CD8-positive, alpha-beta memory T cell (primary cell): ENCODE measurements at regions of chr14 and their contacts with region 1.

Region 1: GRCh38 chr14:93939304-93940229 is 12.4 kb downstream of the FAM181A start:
- DNase-seq: peak; percentile 81 to 91 (median 85)
- H3K4me3 ChIP-seq: peak overlapping the region; percentile 45
- H3K4me3 Mint-ChIP-seq: peak overlapping the region; percentile 26 to 87 (median 56)
- H3K27ac ChIP-seq: no peak overlapping the region
- H3K27ac Mint-ChIP-seq: peak overlapping the region in 4 of 8 donors; percentile 23 to 70 (median 31)
- H3K4me1 ChIP-seq: no peaks in the 10 kb centered on the region
- H3K4me1 Mint-ChIP-seq: peaks cover 5 to 21% (median 6%) of the 10 kb centered on the region in 3 donors
- H3K27me3 ChIP-seq: no peaks in the 10 kb centered on the region
- H3K27me3 Mint-ChIP-seq: peaks cover 0 to 4% of the 10 kb centered on the region in 2 donors

Region 2: DNA sequence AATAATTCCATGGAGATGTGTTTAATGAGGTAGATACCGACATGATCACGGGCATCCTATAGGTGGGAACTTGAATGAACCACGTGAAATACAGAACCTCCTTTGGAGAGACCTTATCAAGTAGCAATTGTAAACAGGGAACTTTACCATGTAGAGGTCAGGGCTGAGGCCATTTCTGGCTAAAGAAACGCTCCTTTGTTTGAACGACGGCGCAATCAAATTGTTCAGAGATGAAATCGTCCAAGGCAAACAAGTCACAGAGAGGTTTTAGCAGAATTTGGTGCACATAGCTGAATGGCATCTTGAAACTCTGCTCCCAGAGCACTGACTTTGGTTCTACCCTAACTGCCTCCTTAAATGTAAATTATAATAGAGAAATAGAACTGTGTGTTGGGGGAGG is 161.1 kb before region 1 on chr14:
- CTCF ChIA-PET with region 1: no interaction called
- POLR2A ChIA-PET with region 1: no interaction called
- DNase-seq: no peak
- H3K4me3 ChIP-seq: no peak overlapping the region
- H3K4me3 Mint-ChIP-seq: no peak overlapping the region
- H3K27ac ChIP-seq: no peak overlapping the region
- H3K27ac Mint-ChIP-seq: no peak overlapping the region
- H3K4me1 ChIP-seq: no peaks in the 10 kb centered on the region
- H3K4me1 Mint-ChIP-seq: no peaks in the 10 kb centered on the region
- H3K27me3 ChIP-seq: no peaks in the 10 kb centered on the region
- H3K27me3 Mint-ChIP-seq: peaks cover 0 to 6% of the 10 kb centered on the region in 2 donors

Region 3: GRCh38 chr14:93799989-93800921 is 139.3 kb before region 1 on chr14:
- CTCF ChIA-PET with region 1: no interaction called
- POLR2A ChIA-PET with region 1: no interaction called
- DNase-seq: no peak
- H3K4me3 ChIP-seq: no peak overlapping the region
- H3K4me3 Mint-ChIP-seq: no peak overlapping the region
- H3K27ac ChIP-seq: no peak overlapping the region
- H3K27ac Mint-ChIP-seq: no peak overlapping the region
- H3K4me1 ChIP-seq: no peaks in the 10 kb centered on the region
- H3K4me1 Mint-ChIP-seq: no peaks in the 10 kb centered on the region
- H3K27me3 ChIP-seq: no peaks in the 10 kb centered on the region
- H3K27me3 Mint-ChIP-seq: peaks cover 2 to 12% of the 10 kb centered on the region in 2 donors

Region 4: DNA sequence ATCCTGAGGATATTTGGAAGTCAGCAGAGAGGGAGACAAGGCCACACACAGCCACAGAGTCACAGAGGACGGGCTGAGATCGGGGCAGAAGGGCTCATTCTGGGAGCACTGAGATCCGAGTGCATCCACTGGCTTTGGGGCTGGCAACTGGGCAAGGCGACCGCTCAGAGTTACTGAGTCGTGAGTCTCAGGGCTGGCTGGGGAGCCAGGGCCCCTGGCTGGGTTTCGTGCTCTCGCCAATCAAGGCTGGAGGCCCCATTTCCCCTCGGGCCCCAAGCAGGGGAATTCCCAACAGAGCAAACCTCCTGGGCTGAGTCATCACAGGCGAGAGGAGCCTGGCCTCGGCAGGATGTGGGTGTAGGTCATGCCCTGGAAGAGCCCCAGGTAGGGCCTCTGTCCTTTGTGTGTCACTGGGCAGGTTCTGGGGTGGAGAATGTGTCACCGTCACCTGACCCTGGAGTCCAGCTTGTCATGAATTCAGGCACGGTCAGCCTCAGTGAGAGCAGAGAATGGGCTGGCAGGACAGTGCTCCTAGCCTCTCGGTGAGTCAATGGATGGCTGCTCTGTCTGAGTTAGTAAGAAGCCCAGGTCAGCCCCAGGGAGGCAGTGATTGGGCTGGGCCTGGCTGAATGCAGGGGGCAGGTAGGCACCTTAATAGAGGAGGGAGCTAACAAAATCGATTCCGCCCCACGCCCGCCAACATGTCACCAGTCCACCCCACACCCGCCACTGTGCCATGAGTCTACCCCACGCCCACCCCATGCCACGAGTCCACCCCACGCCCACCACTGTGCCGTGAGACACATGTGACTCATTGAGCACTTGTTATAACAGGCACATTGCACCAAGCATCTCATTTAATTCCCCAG is 19.9 kb after region 1 on chr14:
- CTCF ChIA-PET with region 1: interaction called, 945 read pairs
- POLR2A ChIA-PET with region 1: interaction called, 17 read pairs
- DNase-seq: peak; percentile 73 to 97 (median 90)
- H3K4me3 ChIP-seq: peak overlapping the region; percentile 3
- H3K4me3 Mint-ChIP-seq: peak overlapping the region; percentile 65 to 88 (median 80)
- H3K27ac ChIP-seq: peak overlapping the region; percentile 55
- H3K27ac Mint-ChIP-seq: peak overlapping the region; percentile 98 to 100 (median 99)
- H3K4me1 ChIP-seq: peaks cover 97% of the 10 kb centered on the region
- H3K4me1 Mint-ChIP-seq: peaks cover 94 to 99% (median 99%) of the 10 kb centered on the region in 3 donors
- H3K27me3 ChIP-seq: no peaks in the 10 kb centered on the region
- H3K27me3 Mint-ChIP-seq: no peaks in the 10 kb centered on the region

Region 5: DNA sequence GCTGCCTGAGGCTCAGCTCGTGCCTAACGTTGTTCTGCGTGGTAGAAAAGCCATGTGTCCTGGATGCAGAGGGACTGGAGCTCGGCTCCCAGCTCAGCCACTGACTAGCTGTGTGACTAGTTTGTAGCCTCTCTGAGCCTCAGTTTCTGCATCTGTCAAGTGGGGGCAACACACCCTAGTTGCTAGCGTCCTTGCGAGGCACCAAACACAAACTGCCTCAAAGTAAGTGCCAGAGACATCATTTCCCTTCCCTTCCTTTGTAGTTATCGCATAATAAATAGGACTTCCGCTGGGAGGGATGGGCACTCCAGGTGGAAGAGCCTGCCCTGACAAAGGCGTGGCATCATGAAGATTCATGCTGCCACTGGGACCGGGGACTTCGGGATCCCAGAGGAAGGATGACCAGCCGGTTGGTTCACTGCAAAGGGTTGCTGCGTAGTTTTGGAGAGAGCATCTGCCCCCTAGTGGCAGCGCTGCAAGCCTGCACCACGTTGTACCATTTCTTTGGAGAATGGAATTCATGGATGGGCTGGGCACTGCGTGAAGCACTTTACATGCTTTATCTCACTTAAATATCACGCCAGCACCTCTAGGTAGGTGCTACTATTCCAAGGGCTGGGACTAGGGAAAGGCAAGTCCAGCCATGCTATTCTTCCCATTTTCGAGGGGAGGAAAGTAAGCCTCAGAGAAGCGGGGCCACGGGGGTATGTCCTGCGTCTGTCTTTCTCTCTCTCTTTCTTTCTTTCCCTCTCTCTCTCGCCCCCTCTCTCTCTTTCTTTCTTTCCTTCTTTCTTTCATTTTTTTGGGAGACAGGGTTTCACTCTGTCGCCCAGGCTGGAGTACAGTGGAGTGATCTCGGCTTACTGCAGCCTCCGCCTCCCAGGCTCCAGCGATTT is 62.2 kb after region 1 on chr14:
- CTCF ChIA-PET with region 1: interaction called, 272 read pairs
- POLR2A ChIA-PET with region 1: interaction called, 8 read pairs
- DNase-seq: peak; percentile 40 to 69 (median 50)
- H3K4me3 ChIP-seq: peak overlapping the region; percentile 27
- H3K4me3 Mint-ChIP-seq: peak overlapping the region in 2 of 7 donors; percentile 10 to 28
- H3K27ac ChIP-seq: no peak overlapping the region
- H3K27ac Mint-ChIP-seq: no peak overlapping the region
- H3K4me1 ChIP-seq: peaks cover 7% of the 10 kb centered on the region
- H3K4me1 Mint-ChIP-seq: peaks cover 6 to 10% (median 7%) of the 10 kb centered on the region in 3 donors
- H3K27me3 ChIP-seq: no peaks in the 10 kb centered on the region
- H3K27me3 Mint-ChIP-seq: peaks cover 4 to 13% of the 10 kb centered on the region in 2 donors

Region 6: DNA sequence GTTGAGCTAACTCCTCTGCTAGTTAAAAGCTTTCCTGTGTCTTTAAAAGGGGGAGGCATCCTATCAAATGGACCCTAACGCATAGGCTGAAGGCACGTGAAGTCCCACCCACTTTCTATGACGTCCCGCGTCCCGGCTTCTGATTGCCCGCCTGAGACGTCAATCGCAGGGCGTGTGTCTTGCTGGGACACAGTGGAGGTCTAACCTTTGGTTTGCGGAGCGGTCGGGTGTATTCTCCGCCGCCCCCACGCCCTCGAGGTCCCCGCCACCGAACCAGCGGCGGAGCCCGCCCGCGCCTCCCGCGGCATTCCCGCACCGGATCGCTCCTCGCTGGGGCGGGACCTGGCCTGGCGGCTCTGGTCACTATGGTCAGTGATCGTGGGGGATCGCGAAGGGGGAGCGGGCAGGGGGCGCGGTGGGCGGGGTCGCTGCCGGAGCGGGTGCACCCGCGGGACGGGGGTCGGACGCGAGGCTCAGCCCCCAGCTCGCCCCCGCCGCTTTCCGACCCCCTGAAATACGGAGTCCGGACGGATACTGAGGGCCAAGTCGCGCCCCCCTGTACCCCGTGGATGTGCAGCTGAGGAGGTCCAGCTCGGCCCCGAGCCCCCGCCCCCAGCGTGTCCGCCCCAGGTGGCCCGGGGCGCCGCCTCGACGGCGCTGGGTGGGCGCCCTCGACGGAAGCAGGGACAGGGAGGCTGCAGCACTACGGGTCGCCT is 86.8 kb after region 1 on chr14 and contains the start of gene OTUB2:
- CTCF ChIA-PET with region 1: interaction called, 29 read pairs
- POLR2A ChIA-PET with region 1: interaction called, 4 read pairs
- DNase-seq: peak; percentile 90 to 96 (median 94)
- H3K4me3 ChIP-seq: peak within 1 kb of the TSS; percentile 57
- H3K4me3 Mint-ChIP-seq: peak within 1 kb of the TSS; percentile 71 to 94 (median 82)
- H3K27ac ChIP-seq: no peak within 1 kb of the TSS
- H3K27ac Mint-ChIP-seq: peak within 1 kb of the TSS in 4 of 8 donors; percentile 19 to 85 (median 82)
- H3K4me1 ChIP-seq: peaks cover 5% of the 10 kb centered on the region
- H3K4me1 Mint-ChIP-seq: peaks cover 21 to 36% (median 34%) of the 10 kb centered on the region in 3 donors
- H3K27me3 ChIP-seq: no peaks in the 10 kb centered on the region
- H3K27me3 Mint-ChIP-seq: peaks cover 0 to 3% of the 10 kb centered on the region in 2 donors
- total RNA-seq, gene OTUB2: 1.1 to 1.8 TPM

Region 7: GRCh38 chr14:94136575-94137331 is 197.2 kb after region 1 on chr14:
- CTCF ChIA-PET with region 1: interaction called, 43 read pairs
- POLR2A ChIA-PET with region 1: interaction called, 3 read pairs
- DNase-seq: peak; percentile 69 to 87 (median 72)
- H3K4me3 ChIP-seq: no peak overlapping the region
- H3K4me3 Mint-ChIP-seq: no peak overlapping the region
- H3K27ac ChIP-seq: no peak overlapping the region
- H3K27ac Mint-ChIP-seq: peak overlapping the region in 1 of 8 donors; percentile 29
- H3K4me1 ChIP-seq: no peaks in the 10 kb centered on the region
- H3K4me1 Mint-ChIP-seq: peaks cover 0 to 5% (median 0%) of the 10 kb centered on the region in 3 donors
- H3K27me3 ChIP-seq: peaks cover 4% of the 10 kb centered on the region
- H3K27me3 Mint-ChIP-seq: peaks cover 5 to 9% of the 10 kb centered on the region in 2 donors